Keratinocyte (primary cell): ENCODE measurements at regions of chr16 and their contacts with region 1.

Region 1: GRCh38 chr16:10918294-10919002 is 23.8 kb downstream of the DEXI start:
- DNase-seq: peak; percentile 84
- H3K4me3 ChIP-seq: no peak overlapping the region
- H3K27ac ChIP-seq: no peak overlapping the region
- H3K4me1 ChIP-seq: peaks cover 3% of the 10 kb centered on the region
- H3K27me3 ChIP-seq: no peaks in the 10 kb centered on the region
- CTCF ChIP-seq: peak; percentile 98 to 99 (median 99)

Region 2: DNA sequence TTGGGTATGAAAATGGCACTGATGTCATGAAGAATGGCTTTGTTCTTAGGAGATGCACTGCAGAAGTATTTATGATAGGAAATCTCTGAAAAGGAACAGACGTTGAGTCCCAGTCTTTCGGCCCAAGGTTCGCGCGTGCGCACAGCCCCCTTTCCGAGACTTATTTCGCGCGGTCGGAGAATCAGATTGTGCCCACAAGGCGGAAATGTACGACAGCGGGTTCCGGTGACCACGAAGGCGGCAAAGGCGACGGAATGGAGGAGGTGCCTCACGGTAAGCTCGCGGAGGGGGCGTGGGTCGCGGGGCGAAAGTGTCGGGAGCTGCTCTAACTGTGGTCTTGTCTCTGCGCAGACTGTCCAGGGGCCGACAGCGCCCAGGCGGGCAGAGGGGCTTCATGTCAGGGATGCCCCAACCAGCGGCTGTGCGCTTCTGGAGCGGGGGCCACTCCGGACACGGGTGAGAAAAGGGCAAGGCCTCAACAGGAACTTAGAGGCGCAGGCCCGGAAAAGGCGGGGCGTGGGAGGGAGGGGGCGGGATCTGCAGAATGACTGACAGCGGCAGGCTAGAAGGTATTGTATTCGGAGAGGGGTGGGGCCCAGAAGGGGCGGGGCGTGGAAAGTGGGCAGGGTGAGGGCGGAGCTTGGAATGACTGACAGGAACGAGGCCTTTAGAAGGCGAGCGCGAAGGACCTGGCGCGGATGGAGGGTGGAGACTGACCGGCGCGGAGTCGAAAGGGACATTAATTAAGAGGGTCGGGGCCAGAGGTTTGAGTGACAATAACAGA is 174.6 kb before region 1 on chr16 and contains the start of gene NUBP1:
- dilution Hi-C with region 1: loop called (anchors 25 kb)
- DNase-seq: peak; percentile 83
- H3K4me3 ChIP-seq: peak within 1 kb of the TSS; percentile 71 to 84 (median 75)
- H3K27ac ChIP-seq: peak within 1 kb of the TSS; percentile 92
- H3K4me1 ChIP-seq: peaks cover 8% of the 10 kb centered on the region
- H3K27me3 ChIP-seq: no peaks in the 10 kb centered on the region
- CTCF ChIP-seq: no peak
- polyA plus RNA-seq, gene NUBP1: 16.7 to 28.4 TPM (median 22.2 TPM) in 3 replicates

Region 3: GRCh38 chr16:10862432-10862831 is 56.0 kb before region 1 on chr16:
- dilution Hi-C with region 1: no loop called
- DNase-seq: peak; percentile 89
- H3K4me3 ChIP-seq: no peak overlapping the region
- H3K27ac ChIP-seq: no peak overlapping the region
- H3K4me1 ChIP-seq: peaks cover 27% of the 10 kb centered on the region
- H3K27me3 ChIP-seq: peaks cover 6% of the 10 kb centered on the region
- CTCF ChIP-seq: no peak